Pancreas (tissue), 10 donors: ENCODE measurements at regions of chr10 and their contacts with region 1.

Region 1: GRCh38 chr10:93482145-93482834 is at the start of gene MYOF:
- DNase-seq: peak in 5 of 6 donors; percentile 41 to 69 (median 42)
- ATAC-seq: peak; percentile 88 to 95 (median 95)
- H3K4me3 ChIP-seq: peak within 1 kb of the TSS; percentile 15 to 65 (median 34)
- H3K27ac ChIP-seq: peak within 1 kb of the TSS; percentile 44 to 90 (median 70)
- H3K4me1 ChIP-seq: no peaks in the 10 kb centered on the region
- H3K27me3 ChIP-seq: no peaks in the 10 kb centered on the region
- CTCF ChIP-seq: peak in 3 of 4 donors; percentile 28 to 37 (median 36)
- total RNA-seq, gene MYOF: 6.7 to 38.2 (median 14.2) TPM

Region 2: GRCh38 chr10:93369588-93370164 is 112.6 kb before region 1 on chr10:
- intact Hi-C with region 1: loop called in 2 of 3 experiments (anchors 5 to 10 kb)
- DNase-seq: no peak
- ATAC-seq: no peak
- H3K4me3 ChIP-seq: no peak overlapping the region
- H3K27ac ChIP-seq: no peak overlapping the region
- H3K4me1 ChIP-seq: no peaks in the 10 kb centered on the region
- H3K27me3 ChIP-seq: no peaks in the 10 kb centered on the region
- CTCF ChIP-seq: no peak

Region 3: DNA sequence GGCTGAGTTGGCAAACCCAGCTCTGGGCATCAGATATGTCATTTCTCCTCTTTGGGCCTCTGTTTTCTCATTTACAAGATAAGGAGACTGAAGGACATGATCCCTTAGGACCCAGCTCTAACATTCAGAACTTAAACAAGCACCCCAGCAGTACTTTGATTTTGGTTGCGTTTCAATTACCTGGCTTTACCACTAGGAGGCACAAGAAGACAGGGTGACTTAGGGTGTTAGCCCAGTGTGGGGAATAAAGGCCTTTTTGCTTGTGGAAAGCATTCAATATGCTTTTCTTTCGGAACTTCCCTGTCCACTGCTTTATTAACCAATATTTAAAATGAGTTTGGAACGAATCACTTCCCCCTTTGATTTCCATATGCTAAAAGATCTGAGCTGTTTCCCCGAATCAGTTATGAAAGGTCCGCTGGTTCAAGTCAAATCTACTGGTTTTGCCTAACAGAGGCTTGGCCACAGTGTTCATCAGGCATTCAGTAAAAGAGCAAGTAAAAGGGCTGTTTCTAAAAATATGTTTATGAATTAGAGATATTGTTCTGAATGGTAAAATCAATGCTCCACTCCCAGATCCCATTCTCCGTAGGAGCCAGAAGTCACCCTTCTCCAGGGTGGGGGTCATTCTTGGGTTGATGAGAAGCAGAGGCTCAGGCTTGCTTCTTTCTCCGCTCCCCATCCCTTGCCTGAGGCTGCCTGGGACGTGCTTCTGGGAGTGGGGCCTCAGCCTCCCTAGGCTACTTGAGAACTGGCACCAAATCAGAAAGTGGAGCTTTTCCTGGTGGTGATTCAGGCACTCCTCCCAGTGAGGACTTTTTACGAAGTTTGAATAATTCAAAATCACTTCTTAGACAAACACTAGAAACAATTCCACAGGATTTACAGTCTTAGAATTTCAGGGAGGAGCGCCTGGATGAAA is 105.7 kb before region 1 on chr10:
- intact Hi-C with region 1: loop called (anchors 2 to 10 kb)
- DNase-seq: peak in 3 of 6 donors; percentile 40 to 62 (median 48)
- ATAC-seq: peak; percentile 82 to 98 (median 96)
- H3K4me3 ChIP-seq: no peak overlapping the region
- H3K27ac ChIP-seq: peak overlapping the region in 2 of 4 donors; percentile 9 to 25
- H3K4me1 ChIP-seq: no peaks in the 10 kb centered on the region
- H3K27me3 ChIP-seq: no peaks in the 10 kb centered on the region
- CTCF ChIP-seq: peak; percentile 75 to 95 (median 85)

Region 4: DNA sequence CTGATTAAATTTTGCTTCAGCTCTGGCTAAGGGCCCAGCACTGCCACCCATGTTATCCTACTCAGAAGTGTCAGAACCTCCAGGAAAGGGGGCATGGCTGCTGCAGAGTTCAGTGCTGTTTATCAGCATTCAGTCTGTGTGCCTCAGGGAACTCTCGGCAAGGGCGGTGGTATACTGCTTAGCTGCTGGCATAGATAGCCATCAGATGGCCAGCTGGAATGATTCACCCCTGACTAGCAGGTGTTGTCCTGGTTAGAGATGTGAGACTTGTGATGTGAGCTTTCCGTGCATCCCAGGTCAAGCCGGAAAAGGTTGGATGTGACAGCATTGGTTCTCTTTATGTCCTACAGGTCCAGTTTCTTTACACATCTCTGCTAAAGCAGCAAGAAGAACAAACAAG is 36.2 kb after region 1 on chr10:
- intact Hi-C with region 1: no loop called
- DNase-seq: no peak
- ATAC-seq: no peak
- H3K4me3 ChIP-seq: no peak overlapping the region
- H3K27ac ChIP-seq: no peak overlapping the region
- H3K4me1 ChIP-seq: no peaks in the 10 kb centered on the region
- H3K27me3 ChIP-seq: no peaks in the 10 kb centered on the region
- CTCF ChIP-seq: no peak

Region 5: GRCh38 chr10:93702211-93703001 is 220.1 kb after region 1 on chr10 and contains the start of gene FRA10AC1:
- intact Hi-C with region 1: no loop called
- DNase-seq: peak; percentile 92 to 99 (median 96)
- ATAC-seq: peak; percentile 97 to 100 (median 99)
- H3K4me3 ChIP-seq: peak within 1 kb of the TSS; percentile 55 to 84 (median 62)
- H3K27ac ChIP-seq: peak within 1 kb of the TSS; percentile 51 to 83 (median 70)
- H3K4me1 ChIP-seq: peaks cover 0 to 19% (median 0%) of the 10 kb centered on the region in 3 donors
- H3K27me3 ChIP-seq: no peaks in the 10 kb centered on the region
- CTCF ChIP-seq: peak in 1 of 4 donors; percentile 32
- total RNA-seq, gene FRA10AC1: 5.1 to 9.7 (median 8.5) TPM